ENCODE measurements at regions of chr4 and their contacts with region 1.

Region 1: DNA sequence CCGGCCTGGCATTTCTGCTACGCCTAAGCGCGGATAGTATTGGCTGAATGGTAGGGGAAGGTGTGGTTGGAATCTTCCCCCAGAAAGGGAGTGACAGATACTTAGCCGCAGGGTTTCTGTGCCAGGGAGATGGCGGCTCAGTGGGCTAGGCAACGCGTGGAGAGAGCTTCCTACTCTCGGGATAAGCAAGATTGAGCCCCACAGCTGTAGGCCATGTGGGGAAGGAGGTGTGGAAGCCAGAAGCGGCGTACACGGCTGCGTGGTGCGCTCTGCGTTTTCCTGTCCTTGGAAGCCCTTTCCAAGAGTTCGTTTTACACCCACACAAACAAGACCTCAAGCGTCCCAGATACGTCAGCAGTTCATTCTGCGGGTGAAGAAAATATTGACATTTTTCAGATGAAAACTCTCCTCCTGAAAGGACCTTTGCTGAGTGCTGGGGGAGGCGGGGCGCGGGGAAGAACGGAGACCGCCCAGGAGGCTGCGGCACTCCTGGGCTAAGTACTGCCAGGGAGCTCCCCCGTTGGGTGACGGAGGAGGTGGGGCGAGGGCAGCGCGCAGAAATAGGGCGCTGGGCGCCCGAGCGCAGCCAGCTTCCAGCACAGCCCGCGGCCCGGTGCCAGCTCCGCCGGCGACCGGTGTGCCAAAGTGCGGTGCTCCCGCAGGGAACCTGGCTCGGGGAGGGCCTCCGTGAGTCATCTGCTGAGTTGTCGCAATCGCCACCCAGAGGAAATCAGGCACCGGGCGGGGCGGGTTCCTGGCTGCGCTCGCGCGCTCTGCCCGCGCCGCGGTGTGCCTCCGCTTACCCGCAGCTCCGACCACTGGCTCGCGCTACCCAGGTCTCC is at the start of gene GPAT3:
- DNase-seq: peak; percentile 89 to 96
- ATAC-seq: peak; percentile 91 to 95 (median 92)
- H3K4me3 ChIP-seq: peak within 1 kb of the TSS; percentile 80
- H3K27ac ChIP-seq: peak within 1 kb of the TSS; percentile 96
- H3K4me1 ChIP-seq: peaks cover 22% of the 10 kb centered on the region
- H3K27me3 ChIP-seq: no peaks in the 10 kb centered on the region
- CTCF ChIP-seq: no peak
- total RNA-seq, gene GPAT3: 18.9 to 55.5 (median 32.6) TPM

Region 2: DNA sequence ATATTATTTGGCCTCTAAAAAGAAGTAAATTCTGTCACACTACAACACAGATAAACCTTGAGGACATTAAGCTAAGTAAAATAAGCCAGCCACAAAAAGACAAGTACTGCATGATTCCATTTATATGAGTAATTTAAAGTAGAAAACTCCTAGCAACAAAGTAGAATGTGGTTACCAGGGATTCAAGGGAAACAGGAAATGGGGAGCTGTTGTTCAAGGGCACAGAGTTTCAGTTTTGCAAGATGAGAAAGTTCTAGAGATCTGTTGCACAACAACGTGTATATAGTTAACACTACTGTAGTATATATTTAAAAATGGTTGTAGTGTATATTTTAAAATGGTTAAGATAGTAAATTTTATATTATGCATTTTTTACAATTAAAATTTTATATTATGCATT is 670.1 kb before region 1 on chr4:
- intact Hi-C with region 1: no loop called
- DNase-seq: no peak
- ATAC-seq: no peak
- H3K4me3 ChIP-seq: no peak overlapping the region
- H3K27ac ChIP-seq: no peak overlapping the region
- H3K4me1 ChIP-seq: no peaks in the 10 kb centered on the region
- H3K27me3 ChIP-seq: no peaks in the 10 kb centered on the region
- CTCF ChIP-seq: no peak

Region 3: DNA sequence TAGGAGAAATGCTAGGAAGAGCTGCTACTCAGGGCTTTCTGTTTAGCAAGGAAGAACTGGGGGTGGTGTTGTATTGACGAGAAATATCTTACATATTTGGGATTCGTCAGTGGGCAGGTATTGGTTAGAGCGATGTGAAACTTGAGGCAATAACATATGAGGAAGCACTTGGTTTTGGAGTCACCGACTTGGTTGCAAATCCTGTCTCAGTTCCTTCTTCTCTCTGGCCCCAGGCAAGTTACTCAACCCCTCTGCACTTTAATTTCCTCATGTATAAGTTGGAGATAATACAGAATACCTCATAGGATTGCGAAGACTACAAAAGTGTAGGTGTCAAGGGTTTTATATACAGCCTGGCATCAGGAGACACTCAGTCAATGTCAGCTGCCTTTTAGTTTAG is 34.2 kb after region 1 on chr4:
- intact Hi-C with region 1: loop called in 1 of 2 experiments (anchors 5 kb)
- DNase-seq: no peak
- ATAC-seq: peak in 1 of 4 donors; percentile 17
- H3K4me3 ChIP-seq: no peak overlapping the region
- H3K27ac ChIP-seq: no peak overlapping the region
- H3K4me1 ChIP-seq: peaks cover 22% of the 10 kb centered on the region
- H3K27me3 ChIP-seq: no peaks in the 10 kb centered on the region
- CTCF ChIP-seq: no peak

Region 4: GRCh38 chr4:83618431-83618830 is 82.7 kb after region 1 on chr4:
- intact Hi-C with region 1: loop called in 1 of 2 experiments (anchors 5 kb)
- DNase-seq: peak; percentile 30 to 56
- ATAC-seq: peak; percentile 97 to 99 (median 99)
- H3K4me3 ChIP-seq: no peak overlapping the region
- H3K27ac ChIP-seq: peak overlapping the region; percentile 88
- H3K4me1 ChIP-seq: peaks cover 21% of the 10 kb centered on the region
- H3K27me3 ChIP-seq: no peaks in the 10 kb centered on the region
- CTCF ChIP-seq: no peak

Region 5: GRCh38 chr4:83629945-83630721 is 94.4 kb after region 1 on chr4:
- intact Hi-C with region 1: loop called in 1 of 2 experiments (anchors 5 kb)
- DNase-seq: no peak
- ATAC-seq: peak in 1 of 4 donors; percentile 20
- H3K4me3 ChIP-seq: no peak overlapping the region
- H3K27ac ChIP-seq: peak overlapping the region; percentile 14
- H3K4me1 ChIP-seq: peaks cover 30% of the 10 kb centered on the region
- H3K27me3 ChIP-seq: no peaks in the 10 kb centered on the region
- CTCF ChIP-seq: no peak

Region 6: DNA sequence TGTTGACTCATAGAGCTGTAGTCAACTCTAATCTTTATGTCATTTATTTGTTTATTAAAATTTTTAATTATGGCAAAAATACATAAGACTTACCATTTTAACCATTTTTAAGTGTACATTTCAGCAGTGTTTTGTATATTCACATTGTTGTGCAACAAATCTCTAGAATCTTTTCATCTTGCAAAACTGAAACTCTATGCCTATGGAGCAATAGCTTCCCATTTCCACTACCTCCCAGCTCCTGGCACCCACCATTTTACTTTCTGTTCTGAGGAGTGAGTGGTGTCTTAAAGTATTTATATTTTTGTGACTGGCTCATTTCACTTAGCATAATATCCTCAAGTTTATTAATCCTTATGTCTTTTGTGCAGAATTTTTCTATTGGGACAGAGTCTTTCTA is 181.1 kb after region 1 on chr4:
- intact Hi-C with region 1: no loop called
- DNase-seq: no peak
- ATAC-seq: no peak
- H3K4me3 ChIP-seq: no peak overlapping the region
- H3K27ac ChIP-seq: no peak overlapping the region
- H3K4me1 ChIP-seq: no peaks in the 10 kb centered on the region
- H3K27me3 ChIP-seq: no peaks in the 10 kb centered on the region
- CTCF ChIP-seq: no peak

Measured in psoas muscle (tissue), 8 donors.